ENCODE measurements at regions of chr14 and their contacts with region 1.

Region 1: GRCh38 chr14:105490572-105491366 is at the start of gene TEDC1:
- DNase-seq: peak; percentile 98 to 100 (median 100)
- H3K4me3 ChIP-seq: peak within 1 kb of the TSS; percentile 59 to 93 (median 78)
- H3K27ac ChIP-seq: peak within 1 kb of the TSS; percentile 29 to 98 (median 93)
- H3K27me3 ChIP-seq: peaks cover 0 to 28% (median 17%) of the 10 kb centered on the region in 45 donors
- CTCF ChIP-seq: peak; percentile 35 to 95 (median 74)
- total RNA-seq, gene TEDC1: 8.9 to 23.4 (median 15.6) TPM

Region 2: DNA sequence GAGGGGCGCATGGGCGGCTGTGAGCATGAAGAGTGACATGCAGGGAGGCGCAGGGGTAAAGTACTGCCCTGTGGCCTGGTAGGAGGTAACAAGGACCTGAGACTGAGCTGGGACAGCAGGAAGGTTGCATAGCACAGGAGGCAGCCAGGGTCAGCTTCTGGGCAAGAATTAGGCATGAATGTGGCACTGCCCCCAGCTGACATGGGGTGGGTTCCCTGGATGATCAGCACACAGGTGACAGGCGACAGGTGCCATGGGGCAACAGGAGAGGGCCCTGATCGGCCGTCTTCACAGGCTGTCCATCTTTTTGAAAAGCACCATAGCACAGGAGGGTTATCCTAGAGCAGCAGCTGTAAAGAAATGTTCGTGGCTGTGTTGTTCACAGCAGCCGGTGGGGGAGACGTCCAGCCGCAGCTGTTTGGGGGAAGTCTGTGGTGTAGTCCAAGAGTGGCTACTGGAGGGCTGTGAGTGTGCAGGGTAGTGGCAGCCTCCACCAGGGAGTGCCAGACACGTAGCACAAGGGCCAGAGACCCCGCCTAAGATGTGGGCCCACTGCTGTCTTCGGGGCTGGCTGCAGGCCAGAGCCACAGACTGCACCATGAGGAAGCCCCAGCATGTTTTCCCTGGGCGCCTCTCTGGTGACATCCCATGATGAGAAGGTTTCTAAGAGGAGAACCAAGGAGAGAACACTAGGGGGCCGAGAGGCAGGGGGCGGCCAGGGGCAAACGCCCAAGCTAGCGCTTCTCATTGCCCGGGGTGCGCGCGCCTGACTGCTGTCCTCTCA is 496.8 kb before region 1 on chr14:
- intact Hi-C with region 1: no loop called
- DNase-seq: no peak
- H3K4me3 ChIP-seq: no peak overlapping the region
- H3K27ac ChIP-seq: no peak overlapping the region
- H3K27me3 ChIP-seq: no peaks in the 10 kb centered on the region
- CTCF ChIP-seq: no peak

Region 3: GRCh38 chr14:105248368-105248756 is 242.4 kb before region 1 on chr14 and contains the start of gene BTBD6:
- intact Hi-C with region 1: loop called in 1 of 2 experiments (anchors 10 kb)
- DNase-seq: peak; percentile 75 to 94 (median 86)
- H3K4me3 ChIP-seq: peak within 1 kb of the TSS; percentile 45 to 85 (median 68)
- H3K27ac ChIP-seq: peak within 1 kb of the TSS in 58 of 59 donors; percentile 63 to 96 (median 88)
- H3K27me3 ChIP-seq: no peaks in the 10 kb centered on the region
- CTCF ChIP-seq: peak in 4 of 56 donors; percentile 13 to 28 (median 18)
- total RNA-seq, gene BTBD6: 28.3 to 99.3 (median 59.6) TPM

Region 4: DNA sequence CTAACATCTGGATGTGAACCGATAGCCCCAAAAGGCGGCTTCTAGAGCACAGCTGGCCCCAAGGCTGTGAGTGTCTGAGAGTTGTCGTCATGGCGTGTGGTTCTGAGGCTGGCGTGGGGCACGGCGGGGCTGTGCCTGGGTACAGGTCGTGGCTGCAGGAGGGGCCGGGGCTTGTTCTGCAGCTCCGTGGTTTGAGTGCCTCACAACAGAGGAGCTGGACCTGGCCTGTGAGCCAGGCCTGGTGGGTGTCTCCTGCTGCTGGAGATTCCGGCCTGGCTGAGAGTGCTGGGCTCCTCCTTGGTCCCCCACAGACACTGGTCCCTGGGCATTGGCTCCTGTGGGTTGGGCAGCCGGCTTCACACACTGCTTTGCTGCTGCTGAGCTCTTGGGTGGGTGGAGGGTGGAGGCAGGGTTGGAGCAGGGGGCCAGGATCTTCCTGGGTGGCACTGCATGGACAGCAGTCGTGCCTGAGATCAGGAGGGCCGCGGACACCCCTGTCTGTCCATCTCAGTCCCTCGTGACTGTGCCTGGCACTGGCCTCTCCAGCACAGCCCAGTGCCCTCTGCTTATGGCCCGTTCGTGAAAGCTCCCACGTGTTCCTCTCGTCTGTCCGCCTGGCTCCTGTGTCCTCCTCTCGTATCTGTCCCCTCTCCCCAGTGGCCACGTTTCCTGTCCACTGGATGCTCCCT is 124.2 kb before region 1 on chr14:
- intact Hi-C with region 1: loop called (anchors 1 to 2 kb)
- DNase-seq: peak in 5 of 10 donors; percentile 32 to 68 (median 60)
- H3K4me3 ChIP-seq: no peak overlapping the region
- H3K27ac ChIP-seq: peak overlapping the region in 52 of 59 donors; percentile 15 to 90 (median 62)
- H3K27me3 ChIP-seq: no peaks in the 10 kb centered on the region
- CTCF ChIP-seq: no peak

Region 5: GRCh38 chr14:105519946-105520698 is 29.4 kb after region 1 on chr14:
- intact Hi-C with region 1: no loop called
- DNase-seq: peak in 1 of 10 donors; percentile 15
- H3K4me3 ChIP-seq: no peak overlapping the region
- H3K27ac ChIP-seq: no peak overlapping the region
- H3K27me3 ChIP-seq: peaks cover 0 to 4% (median 0%) of the 10 kb centered on the region in 45 donors
- CTCF ChIP-seq: no peak

Region 6: GRCh38 chr14:105617201-105617777 is 126.5 kb after region 1 on chr14:
- intact Hi-C with region 1: no loop called
- DNase-seq: peak in 2 of 10 donors; percentile 30 to 42
- H3K4me3 ChIP-seq: no peak overlapping the region
- H3K27ac ChIP-seq: no peak overlapping the region
- H3K27me3 ChIP-seq: peaks cover 0 to 21% (median 0%) of the 10 kb centered on the region in 45 donors
- CTCF ChIP-seq: no peak

Measured in dorsolateral prefrontal cortex (tissue), 120 donors.